Right ventricle myocardium inferior (tissue), 1 donor: ENCODE measurements at regions of chr12 and their contacts with region 1.

Region 1: GRCh38 chr12:13534645-13535398 is 338.3 kb downstream of the EMP1 start:
- DNase-seq: peak; percentile 71
- ATAC-seq: peak; percentile 75

Region 2: DNA sequence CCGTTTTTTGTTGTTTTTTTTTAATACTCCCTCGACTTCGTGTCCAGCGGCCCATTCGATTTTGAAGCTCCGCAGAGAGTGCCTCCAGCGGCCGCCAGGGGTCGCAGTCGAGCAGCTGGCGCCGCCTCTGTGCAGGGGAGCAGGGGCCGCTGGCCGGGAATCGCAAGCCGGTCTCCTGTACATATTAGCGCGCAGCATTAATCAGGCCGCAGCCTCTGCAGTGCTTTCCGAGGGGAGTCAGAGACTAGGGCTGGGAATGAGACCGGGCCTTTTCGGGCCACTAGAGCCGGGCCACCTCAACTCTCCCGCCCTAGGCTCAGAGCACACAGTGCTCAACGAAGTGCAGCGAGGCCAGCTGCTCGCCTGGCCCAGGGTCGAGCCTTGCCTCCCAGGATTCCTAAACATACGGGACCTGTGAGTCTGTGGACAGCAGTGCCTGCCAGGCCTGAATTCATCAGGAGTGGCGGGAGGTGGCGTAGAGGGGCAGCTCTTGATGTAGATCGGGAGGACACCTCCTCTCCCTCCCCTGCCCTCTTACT is 256.5 kb before region 1 on chr12:
- intact Hi-C with region 1: loop called (anchors 5 kb)
- DNase-seq: peak; percentile 85
- ATAC-seq: peak; percentile 95

Region 3: GRCh38 chr12:13362260-13362841 is 172.5 kb before region 1 on chr12:
- intact Hi-C with region 1: loop called (anchors 5 kb)
- DNase-seq: peak; percentile 63
- ATAC-seq: peak; percentile 71